H1 (cell line): ENCODE measurements at regions of chr6 and their contacts with region 1.

Region 1: GRCh38 chr6:154675602-154676088 is 57.6 kb upstream of the SCAF8 start:
- DNase-seq: peak; percentile 88 to 89
- H3K4me3 ChIP-seq: no peak overlapping the region
- H3K27ac ChIP-seq: no peak overlapping the region
- H3K4me1 ChIP-seq: no peaks in the 10 kb centered on the region
- H3K27me3 ChIP-seq: no peaks in the 10 kb centered on the region
- CTCF ChIP-seq: peak; percentile 65 to 100 (median 99)
- EP300 ChIP-seq: no peak
- POLR2A ChIP-seq: no peak
- RAD21 ChIP-seq: peak; percentile 100

Region 2: GRCh38 chr6:154500769-154501577 is 174.7 kb before region 1 on chr6:
- CTCF ChIA-PET with region 1: interaction called, 11 read pairs
- POLR2A ChIA-PET with region 1: no interaction called
- DNase-seq: no peak
- H3K4me3 ChIP-seq: no peak overlapping the region
- H3K27ac ChIP-seq: no peak overlapping the region
- H3K4me1 ChIP-seq: peaks cover 0 to 5% (median 2%) of the 10 kb centered on the region in 4 experiments; a peak in 2 of 7 replicates
- H3K27me3 ChIP-seq: peaks cover 8 to 28% (median 22%) of the 10 kb centered on the region in 4 experiments
- CTCF ChIP-seq: peak in 2 of 3 experiments; percentile 71; a peak in 3 of 4 replicates
- EP300 ChIP-seq: no peak
- POLR2A ChIP-seq: no peak
- RAD21 ChIP-seq: peak; percentile 59 to 71

Region 3: DNA sequence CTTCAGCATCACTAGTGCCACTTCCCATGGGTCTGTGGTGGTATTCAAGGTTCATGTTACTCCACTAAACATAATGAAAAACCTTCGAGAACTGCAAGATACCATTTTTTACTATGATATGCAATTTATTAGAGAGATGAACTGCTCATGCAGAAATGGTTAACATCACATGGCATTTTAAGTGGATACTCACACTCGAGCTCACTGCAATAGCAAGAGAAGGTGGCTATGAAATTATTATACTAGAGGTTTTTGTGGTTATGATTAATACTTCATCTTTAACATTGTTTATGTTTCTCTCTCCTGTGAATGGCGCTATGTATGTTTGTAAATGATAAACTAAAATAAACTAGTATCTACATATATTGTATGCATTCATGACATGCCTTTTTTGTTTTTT is 92.6 kb after region 1 on chr6:
- CTCF ChIA-PET with region 1: interaction called, 11 read pairs
- POLR2A ChIA-PET with region 1: no interaction called
- DNase-seq: no peak
- H3K4me3 ChIP-seq: no peak overlapping the region
- H3K27ac ChIP-seq: no peak overlapping the region
- H3K4me1 ChIP-seq: peaks cover 0 to 5% (median 0%) of the 10 kb centered on the region in 4 experiments; a peak in 4 of 7 replicates
- H3K27me3 ChIP-seq: no peaks in the 10 kb centered on the region
- CTCF ChIP-seq: no peak
- EP300 ChIP-seq: no peak
- POLR2A ChIP-seq: no peak
- RAD21 ChIP-seq: no peak

Region 4: DNA sequence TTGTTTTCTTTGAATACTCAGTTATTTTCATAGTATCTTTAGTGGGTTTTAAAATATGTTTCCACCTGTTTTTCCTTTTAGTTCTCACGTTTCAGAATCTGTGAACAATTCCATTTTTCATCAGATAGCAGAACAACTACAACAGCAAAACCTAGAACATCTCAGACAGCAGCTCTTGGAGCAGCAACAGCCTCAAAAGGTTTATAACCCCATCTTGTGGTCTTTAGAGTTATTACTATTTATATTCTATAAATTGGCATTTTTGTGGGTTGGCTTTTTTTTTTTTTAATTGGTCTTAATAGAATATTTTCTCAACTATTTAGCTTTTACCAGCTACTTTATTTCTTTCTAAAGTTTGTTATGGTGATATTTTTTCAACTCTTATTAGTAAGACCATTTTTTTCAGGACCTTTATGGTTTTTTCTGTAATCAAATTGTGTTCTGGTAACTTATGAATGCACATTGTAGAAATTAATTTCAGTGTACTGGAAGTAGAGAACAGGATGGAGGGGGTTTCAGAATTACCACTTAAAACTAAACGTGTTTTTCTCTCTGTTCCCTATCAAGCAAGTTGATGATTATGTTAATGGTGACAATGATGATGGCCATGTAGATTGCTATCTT is 129.8 kb after region 1 on chr6:
- CTCF ChIA-PET with region 1: interaction called, 40 read pairs
- POLR2A ChIA-PET with region 1: no interaction called
- DNase-seq: no peak
- H3K4me3 ChIP-seq: no peak overlapping the region
- H3K27ac ChIP-seq: no peak overlapping the region
- H3K4me1 ChIP-seq: no peaks in the 10 kb centered on the region
- H3K27me3 ChIP-seq: peaks cover 0 to 1% (median 0%) of the 10 kb centered on the region in 4 experiments; a peak in 1 of 7 replicates
- CTCF ChIP-seq: peak in 2 of 3 experiments; percentile 10 to 39; a peak in 2 of 4 replicates
- EP300 ChIP-seq: no peak
- POLR2A ChIP-seq: no peak
- RAD21 ChIP-seq: peak; percentile 61 to 63

Region 5: DNA sequence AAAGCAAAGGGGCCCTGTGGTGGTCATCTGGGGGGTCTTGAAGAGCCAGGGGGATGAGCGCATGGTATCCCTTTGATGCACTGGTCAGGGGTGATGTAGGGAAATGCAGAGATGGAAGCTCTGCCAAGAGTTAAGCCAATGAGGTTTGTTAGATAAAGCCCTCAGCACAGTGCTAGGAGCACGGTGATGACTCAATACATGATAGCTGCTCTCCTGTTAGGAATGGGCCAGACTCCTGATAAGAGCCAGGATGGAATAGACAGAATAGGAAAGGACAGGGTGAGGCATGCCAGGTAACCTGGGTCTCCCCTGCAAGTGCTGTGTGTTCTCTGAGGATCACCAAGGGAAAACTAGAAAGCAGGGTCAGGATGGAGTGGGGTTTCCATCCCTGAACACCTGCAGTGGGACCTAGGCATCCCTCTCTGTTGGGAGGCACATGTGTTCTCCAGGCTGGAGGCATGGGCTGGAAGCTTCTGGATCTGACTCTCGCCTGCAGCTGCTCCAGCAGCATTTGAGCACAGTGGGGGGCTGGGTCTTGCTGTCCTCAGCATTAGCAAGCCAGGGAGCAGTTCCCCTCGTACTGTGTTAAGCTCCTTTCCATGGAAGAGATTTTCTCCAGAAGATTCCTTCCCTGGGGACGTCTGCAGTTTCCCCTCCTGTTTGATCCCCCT is 247.7 kb after region 1 on chr6:
- CTCF ChIA-PET with region 1: interaction called, 19 read pairs
- POLR2A ChIA-PET with region 1: no interaction called
- DNase-seq: no peak
- H3K4me3 ChIP-seq: no peak overlapping the region
- H3K27ac ChIP-seq: no peak overlapping the region
- H3K4me1 ChIP-seq: peaks cover 0 to 4% (median 2%) of the 10 kb centered on the region in 4 experiments; a peak in 3 of 7 replicates
- H3K27me3 ChIP-seq: no peaks in the 10 kb centered on the region
- CTCF ChIP-seq: no peak
- EP300 ChIP-seq: no peak
- POLR2A ChIP-seq: no peak
- RAD21 ChIP-seq: no peak